Activated CD8-positive, alpha-beta T cell treated with anti-CD3 and anti-CD28 coated beads for 36 hours (primary cell): ENCODE measurements at regions of chr2 and their contacts with region 1.

Region 1: GRCh38 chr2:181058378-181059269 is 78.2 kb downstream of the UBE2E3 start:
- DNase-seq: peak; percentile 68
- ATAC-seq: peak; percentile 66
- H3K4me3 Mint-ChIP-seq: no peak overlapping the region
- H3K27ac Mint-ChIP-seq: no peak overlapping the region
- H3K4me1 Mint-ChIP-seq: peaks cover 6% of the 10 kb centered on the region
- H3K27me3 Mint-ChIP-seq: no peaks in the 10 kb centered on the region
- CTCF ChIP-seq: peak; percentile 98

Region 2: GRCh38 chr2:180125245-180125962 is 933.2 kb before region 1 on chr2:
- CTCF ChIA-PET with region 1: interaction called, 30 read pairs
- POLR2A ChIA-PET with region 1: no interaction called
- intact Hi-C with region 1: loop called (anchors 2 kb)
- DNase-seq: peak; percentile 49
- ATAC-seq: peak; percentile 85
- H3K4me3 Mint-ChIP-seq: no peak overlapping the region
- H3K27ac Mint-ChIP-seq: no peak overlapping the region
- H3K4me1 Mint-ChIP-seq: no peaks in the 10 kb centered on the region
- H3K27me3 Mint-ChIP-seq: peaks cover 20% of the 10 kb centered on the region
- CTCF ChIP-seq: peak; percentile 41

Region 3: GRCh38 chr2:181046833-181047232 is 11.8 kb before region 1 on chr2:
- CTCF ChIA-PET with region 1: interaction called, 12 read pairs
- POLR2A ChIA-PET with region 1: no interaction called
- intact Hi-C with region 1: no loop called
- DNase-seq: no peak
- ATAC-seq: peak; percentile 55
- H3K4me3 Mint-ChIP-seq: no peak overlapping the region
- H3K27ac Mint-ChIP-seq: no peak overlapping the region
- H3K4me1 Mint-ChIP-seq: peaks cover 6% of the 10 kb centered on the region
- H3K27me3 Mint-ChIP-seq: no peaks in the 10 kb centered on the region
- CTCF ChIP-seq: no peak

Region 4: DNA sequence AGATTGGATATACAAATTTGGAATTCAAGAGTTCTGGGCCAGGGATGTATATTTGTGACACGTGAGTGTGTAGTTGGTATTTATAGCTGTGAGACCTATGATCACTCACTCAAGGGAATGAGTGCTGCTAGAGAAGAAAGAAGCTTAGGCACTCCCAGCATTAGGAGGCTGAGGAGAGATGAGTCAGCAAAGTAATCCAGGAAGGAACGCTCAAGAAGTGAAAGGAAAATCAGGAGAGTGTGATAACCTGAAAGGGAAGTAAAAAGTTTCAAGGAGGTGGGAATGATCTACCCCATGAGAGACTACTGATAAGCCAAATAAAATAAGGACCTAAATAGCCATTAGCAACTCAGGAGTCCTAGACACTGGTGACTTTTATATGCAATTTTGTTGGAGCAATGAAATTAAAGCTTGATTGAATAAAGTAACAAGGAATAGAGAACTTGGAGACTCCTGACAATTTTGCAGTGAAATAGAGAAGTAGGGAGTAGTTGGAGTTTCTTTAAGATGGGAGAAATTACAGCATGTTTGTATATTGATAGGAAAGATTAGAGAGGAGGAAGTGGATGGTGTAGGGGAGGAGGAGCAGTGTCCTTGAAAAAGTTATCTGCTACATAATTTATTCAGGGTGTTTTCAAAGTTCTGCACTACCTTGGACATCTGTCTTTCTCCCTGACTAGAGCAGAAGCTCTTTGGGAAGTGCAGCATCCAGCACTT is 11.7 kb after region 1 on chr2:
- CTCF ChIA-PET with region 1: interaction called, 14 read pairs
- POLR2A ChIA-PET with region 1: no interaction called
- intact Hi-C with region 1: no loop called
- DNase-seq: no peak
- ATAC-seq: no peak
- H3K4me3 Mint-ChIP-seq: no peak overlapping the region
- H3K27ac Mint-ChIP-seq: no peak overlapping the region
- H3K4me1 Mint-ChIP-seq: peaks cover 6% of the 10 kb centered on the region
- H3K27me3 Mint-ChIP-seq: no peaks in the 10 kb centered on the region
- CTCF ChIP-seq: no peak